ENCODE measurements at regions of chr9 and their contacts with region 1.

Region 1: GRCh38 chr9:127578955-127579853 is 32.9 kb upstream of the STXBP1 start:
- H3K4me3 Mint-ChIP-seq: peak overlapping the region; percentile 99
- H3K27ac Mint-ChIP-seq: peak overlapping the region; percentile 100
- H3K4me1 Mint-ChIP-seq: peaks cover 79% of the 10 kb centered on the region
- H3K27me3 Mint-ChIP-seq: no peaks in the 10 kb centered on the region

Region 2: DNA sequence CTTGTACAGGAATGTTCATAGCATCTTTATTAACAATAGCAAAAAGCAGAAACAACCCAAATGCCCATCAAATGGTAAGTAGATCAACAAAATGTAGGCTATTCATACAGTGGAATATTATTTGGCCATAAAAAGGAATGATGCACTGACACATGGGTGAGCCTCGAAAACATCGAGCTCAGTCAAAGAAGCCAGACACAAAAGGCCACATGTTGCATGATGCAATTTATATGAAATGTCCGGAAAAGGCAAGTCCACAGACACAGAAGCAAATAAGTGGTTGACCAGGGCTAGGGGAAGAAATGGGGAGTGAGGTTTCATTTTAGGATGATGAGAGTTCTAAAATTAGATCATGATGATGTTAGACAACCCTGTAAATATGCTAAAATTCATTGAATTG is 198.7 kb before region 1 on chr9:
- intact Hi-C with region 1: no loop called
- H3K4me3 Mint-ChIP-seq: no peak overlapping the region
- H3K27ac Mint-ChIP-seq: no peak overlapping the region
- H3K4me1 Mint-ChIP-seq: no peaks in the 10 kb centered on the region
- H3K27me3 Mint-ChIP-seq: peaks cover 23% of the 10 kb centered on the region

Region 3: GRCh38 chr9:127555768-127556397 is 23.3 kb before region 1 on chr9:
- intact Hi-C with region 1: loop called (anchors 1 kb)
- H3K4me3 Mint-ChIP-seq: peak overlapping the region; percentile 60
- H3K27ac Mint-ChIP-seq: peak overlapping the region; percentile 84
- H3K4me1 Mint-ChIP-seq: peaks cover 95% of the 10 kb centered on the region
- H3K27me3 Mint-ChIP-seq: no peaks in the 10 kb centered on the region

Region 4: DNA sequence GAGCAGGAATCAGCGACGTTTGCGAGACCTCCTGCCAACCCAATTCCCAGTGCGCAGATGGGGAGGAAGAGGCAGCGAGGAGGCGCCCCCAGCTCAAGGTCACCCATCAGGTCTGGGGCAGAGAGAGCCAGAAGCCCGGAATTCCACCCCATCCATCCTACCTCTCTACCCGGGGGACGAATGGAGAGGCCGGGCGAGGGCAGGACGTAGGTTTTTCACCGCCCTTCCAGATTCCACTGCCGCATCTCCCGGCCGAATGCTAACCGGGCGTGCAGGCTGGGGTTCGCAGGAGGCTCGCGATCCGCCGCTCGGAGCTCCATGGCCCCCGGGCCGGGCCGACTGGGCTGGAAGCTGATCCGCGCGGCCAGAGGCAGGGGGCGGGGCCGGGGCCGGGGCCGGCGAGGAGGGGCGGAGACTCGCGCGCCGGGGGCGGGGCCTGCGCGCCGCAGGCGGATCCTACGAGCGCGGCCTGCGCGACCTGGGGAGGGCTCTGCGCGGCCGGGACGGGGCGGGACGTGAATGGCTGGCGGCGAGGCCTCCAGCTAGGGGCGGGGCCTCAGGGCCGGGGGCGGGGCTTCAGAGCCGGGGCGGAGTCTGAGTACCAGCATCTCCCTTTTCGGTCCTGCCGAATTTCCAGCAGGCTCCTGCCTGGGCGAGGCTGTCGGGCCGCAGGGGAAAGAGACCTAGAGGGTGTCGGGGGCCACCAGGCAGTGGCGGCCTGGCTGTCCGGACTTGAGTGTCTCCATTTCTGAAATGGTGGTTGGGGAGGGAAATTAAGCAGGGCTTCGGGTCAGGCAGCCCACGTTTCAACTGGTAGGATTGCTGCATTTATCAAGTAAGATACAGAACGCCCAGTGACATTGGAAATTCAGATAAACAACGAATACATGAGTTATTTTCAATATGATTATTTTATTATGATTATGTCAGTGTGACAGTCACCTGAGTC is 337.7 kb after region 1 on chr9 and contains the start of gene ST6GALNAC4:
- intact Hi-C with region 1: loop called (anchors 10 kb)
- H3K4me3 Mint-ChIP-seq: peak within 1 kb of the TSS; percentile 86
- H3K27ac Mint-ChIP-seq: peak within 1 kb of the TSS; percentile 86
- H3K4me1 Mint-ChIP-seq: peaks cover 77% of the 10 kb centered on the region
- H3K27me3 Mint-ChIP-seq: peaks cover 6% of the 10 kb centered on the region

Region 5: GRCh38 chr9:128026773-128027541 is 447.8 kb after region 1 on chr9:
- intact Hi-C with region 1: no loop called
- H3K4me3 Mint-ChIP-seq: no peak overlapping the region
- H3K27ac Mint-ChIP-seq: no peak overlapping the region
- H3K4me1 Mint-ChIP-seq: peaks cover 43% of the 10 kb centered on the region
- H3K27me3 Mint-ChIP-seq: peaks cover 20% of the 10 kb centered on the region